Head of caudate nucleus (tissue), 42 donors: ENCODE measurements at regions of chr6 and their contacts with region 1.

Region 1: DNA sequence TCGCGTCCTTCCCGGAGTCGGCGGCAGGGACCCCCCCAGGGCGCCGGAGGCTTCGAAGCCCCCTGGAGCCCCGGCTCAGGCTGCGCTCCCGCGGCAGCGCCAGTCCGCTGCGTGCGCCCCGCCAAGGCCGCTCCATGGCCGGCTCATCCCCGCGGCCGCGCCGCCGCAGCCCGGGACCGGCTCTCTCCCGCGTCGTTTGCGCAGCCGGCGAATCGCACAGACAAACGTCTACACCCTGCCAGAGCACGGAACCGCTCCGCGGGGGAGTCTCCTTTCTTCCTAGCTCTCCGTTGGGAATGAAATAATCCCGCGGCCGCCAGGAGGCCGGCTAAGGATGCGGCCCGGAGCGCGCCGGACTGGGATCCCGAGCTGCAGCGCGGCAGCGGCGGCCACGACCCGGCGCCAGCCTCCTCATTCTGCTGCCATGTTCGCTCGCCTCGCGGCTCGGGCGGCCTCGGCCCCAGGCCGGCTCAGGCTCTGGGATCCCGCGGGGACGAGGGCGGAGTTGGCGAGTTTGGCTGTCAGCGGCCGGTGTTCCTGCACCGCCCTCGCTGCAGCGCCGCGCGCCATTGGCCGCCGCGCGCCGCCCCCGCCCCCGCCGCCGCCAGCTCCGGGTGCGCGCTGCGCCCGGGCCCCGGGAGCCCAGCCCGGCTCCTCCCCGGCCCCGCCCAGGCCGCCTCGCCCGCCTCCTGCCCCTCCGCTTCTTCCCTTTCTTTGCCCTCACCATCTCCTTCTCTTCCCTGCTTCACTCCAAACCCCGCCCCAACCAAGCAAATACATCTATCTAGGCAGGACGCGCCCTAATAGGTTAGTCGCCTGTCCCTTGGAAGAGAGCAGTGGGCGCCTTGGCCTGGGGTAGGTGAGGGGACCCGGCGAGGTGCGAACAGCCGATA is at the start of gene GFOD1:
- DNase-seq: peak; percentile 61 to 95 (median 89)

Region 2: GRCh38 chr6:13063300-13063918 is 424.0 kb before region 1 on chr6:
- intact Hi-C with region 1: no loop called
- DNase-seq: peak in 2 of 42 donors; percentile 30 to 52

Region 3: GRCh38 chr6:13355043-13355951 is 132.1 kb before region 1 on chr6:
- intact Hi-C with region 1: loop called (anchors 10 kb)
- DNase-seq: no peak

Region 4: DNA sequence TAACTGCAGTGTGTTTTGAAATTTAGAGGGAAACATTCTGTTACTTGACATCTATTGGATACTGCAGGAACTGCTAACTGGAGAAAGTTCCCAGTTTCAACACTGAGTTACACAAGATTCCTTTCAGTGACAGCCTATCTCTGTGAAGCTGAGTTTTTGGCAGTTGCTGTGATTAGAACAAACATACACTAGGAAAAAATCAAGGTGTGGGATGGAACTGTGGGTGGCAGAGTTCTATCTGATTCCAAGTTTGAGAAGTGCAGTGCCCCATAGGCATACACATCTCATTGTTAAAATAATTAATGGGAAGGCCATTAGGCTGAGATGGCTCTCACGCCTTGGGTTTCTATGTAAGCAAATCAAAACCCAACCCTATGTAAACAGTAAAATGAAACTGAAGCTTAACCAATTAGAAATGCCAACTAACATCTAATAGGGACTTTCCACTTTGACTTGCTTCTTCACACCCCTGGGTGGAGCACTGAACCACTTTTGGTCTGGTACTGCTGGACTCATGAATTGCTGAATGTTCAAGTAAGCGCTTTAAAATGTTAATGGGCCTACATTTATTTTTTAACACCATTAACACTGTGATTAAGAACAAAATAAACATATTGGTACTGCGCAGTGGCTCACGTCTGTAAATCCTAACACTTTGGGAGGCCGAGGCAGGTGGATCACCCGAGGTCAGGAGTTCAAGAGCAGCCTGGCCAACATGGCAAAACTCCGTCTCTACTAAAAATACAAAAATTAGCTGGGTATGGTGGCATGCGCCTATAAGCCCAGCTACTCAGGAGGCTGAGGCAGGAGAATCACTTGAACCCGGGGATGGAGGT is 103.8 kb before region 1 on chr6:
- intact Hi-C with region 1: no loop called
- DNase-seq: peak in 4 of 42 donors; percentile 15 to 59 (median 47)

Region 5: DNA sequence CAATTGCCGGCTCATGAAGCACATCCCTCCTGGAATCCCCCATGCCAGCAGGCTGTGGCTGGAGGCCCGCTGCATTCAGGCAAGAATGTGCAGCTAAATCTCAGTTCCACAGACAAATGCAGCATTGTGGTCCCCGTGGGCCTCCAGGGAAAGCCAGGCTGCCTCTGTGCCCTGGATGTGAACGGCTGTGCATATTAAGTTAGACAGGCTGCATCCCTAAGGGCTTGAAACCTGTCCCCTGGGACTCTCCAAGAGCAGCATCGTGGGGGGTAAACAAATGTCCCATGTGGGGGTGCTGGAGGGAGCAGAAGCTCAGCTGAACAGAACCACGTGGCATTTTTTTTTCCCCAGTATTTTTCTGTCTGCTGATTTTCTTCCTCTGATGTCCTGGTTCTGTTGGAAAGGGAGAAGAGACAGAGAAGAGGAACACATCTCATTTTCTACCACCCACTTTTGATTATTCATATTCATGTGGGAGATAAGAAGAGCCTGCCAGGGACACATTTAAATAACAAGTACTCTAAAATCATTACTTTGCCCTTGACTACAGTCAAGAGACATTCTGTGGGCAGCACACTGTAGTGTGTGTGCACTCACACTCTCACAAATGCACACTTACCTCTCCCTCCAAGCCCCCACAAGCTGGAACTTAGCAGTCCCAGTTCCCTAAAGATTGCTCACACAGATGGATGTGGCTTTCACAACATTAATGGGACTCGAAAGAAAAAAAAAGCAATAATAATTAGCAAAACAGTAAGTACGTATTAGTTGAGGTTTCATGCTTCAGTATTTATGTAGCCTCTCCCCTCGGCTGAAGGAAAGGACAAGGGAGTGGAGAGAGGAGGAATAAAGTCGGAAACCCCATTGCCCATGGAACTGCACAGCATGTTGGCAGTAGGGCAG is 16.9 kb before region 1 on chr6:
- intact Hi-C with region 1: loop called (anchors 1 kb)
- DNase-seq: peak; percentile 49 to 86 (median 74)

Region 6: DNA sequence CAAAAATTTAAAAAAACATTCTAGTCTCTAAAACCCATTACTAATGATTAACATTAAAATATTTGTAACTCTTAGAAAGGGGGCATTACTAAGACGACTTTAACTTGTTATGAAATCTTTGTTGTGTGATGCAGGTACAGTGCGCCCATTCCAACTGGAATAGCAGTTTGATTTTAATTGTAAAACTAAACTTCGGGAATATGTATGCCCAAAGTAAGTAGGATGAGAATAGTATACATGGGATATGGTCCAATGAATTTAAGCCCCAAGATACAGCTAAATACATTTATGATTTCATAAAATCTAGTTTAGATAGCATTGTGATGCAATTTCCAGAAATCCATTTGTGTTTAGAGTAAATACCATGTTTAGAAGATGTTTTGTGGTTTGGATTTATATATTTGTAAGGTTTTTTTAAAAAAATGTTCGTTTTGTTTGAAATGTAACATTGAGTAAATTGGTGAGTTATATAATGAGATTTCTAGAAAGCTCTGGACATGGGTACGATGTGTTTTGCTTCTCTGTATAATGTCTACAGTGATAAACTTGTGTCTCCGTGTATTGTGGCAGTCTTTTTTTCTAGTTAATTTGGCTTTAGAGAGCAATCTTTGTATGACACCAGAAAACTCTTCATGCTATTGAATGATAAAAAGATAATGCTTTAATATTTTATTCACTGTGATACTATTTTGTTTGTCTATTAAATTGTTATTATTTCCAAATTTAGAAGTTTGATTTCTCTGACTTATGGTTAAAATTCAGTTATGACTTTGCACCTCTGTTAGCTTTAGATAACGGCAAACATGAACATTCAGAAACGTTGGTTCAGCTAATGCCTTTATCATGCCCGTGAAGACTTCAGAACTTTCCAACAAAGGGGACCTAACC is 492.2 kb after region 1 on chr6:
- intact Hi-C with region 1: no loop called
- DNase-seq: no peak